Natural killer cell (primary cell): ENCODE measurements at regions of chr12 and their contacts with region 1.

Region 1: DNA sequence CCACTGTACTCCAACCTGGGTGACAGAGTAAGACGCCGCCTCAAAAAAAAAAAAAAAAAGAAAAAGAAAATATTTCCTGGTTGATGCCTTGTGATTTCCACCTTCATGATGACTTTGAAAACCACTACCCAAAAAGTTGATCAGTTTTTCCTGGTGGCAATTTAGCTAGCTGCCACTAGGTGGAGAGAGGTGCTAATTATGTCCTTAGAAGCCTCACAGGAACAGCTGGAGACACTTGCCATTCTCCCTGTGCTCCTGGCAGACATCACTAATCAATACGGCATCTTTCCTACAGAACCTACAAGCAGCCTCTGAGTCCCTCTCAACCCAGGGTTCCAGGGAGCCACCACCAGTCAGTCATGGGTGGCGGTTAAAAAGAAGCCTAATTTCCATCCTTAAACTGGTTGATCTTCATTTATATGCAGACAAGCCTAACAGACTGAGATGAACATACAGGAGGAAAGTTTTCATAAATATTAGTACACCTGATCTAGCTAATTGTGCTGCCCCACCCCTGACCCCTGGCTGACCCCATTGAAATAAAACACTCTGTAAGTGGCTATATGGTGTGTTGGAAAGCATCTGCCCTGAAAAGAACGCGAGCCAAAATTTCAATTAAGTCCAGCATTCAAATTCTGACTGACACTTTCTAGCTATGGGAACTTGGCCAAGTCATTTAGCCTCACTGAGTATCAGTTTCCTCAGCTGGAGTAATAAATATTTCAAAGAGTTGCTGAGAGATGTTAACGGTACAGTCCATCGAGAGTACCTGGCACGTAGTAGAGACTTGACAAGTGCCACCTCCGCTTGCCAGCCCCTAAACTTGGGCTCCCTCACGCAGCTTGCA is 6.2 kb upstream of the OAS1 start:
- DNase-seq: peak in 1 of 2 donors; percentile 71
- ATAC-seq: peak; percentile 35 to 61 (median 49)
- H3K4me3 ChIP-seq: no peak overlapping the region
- H3K4me3 Mint-ChIP-seq: no peak overlapping the region
- H3K27ac ChIP-seq: no peak overlapping the region
- H3K27ac Mint-ChIP-seq: no peak overlapping the region
- H3K4me1 ChIP-seq: no peaks in the 10 kb centered on the region
- H3K4me1 Mint-ChIP-seq: peaks cover 10 to 12% of the 10 kb centered on the region in 2 donors
- H3K27me3 ChIP-seq: no peaks in the 10 kb centered on the region
- H3K27me3 Mint-ChIP-seq: peaks cover 13 to 22% of the 10 kb centered on the region in 2 donors
- CTCF ChIP-seq: peak; percentile 63

Region 2: GRCh38 chr12:113030875-113031525 is 130.5 kb after region 1 on chr12:
- intact Hi-C with region 1: loop called (anchors 1 kb)
- DNase-seq: peak in 1 of 2 donors; percentile 54
- ATAC-seq: peak in 1 of 3 donors; percentile 64
- H3K4me3 ChIP-seq: no peak overlapping the region
- H3K4me3 Mint-ChIP-seq: no peak overlapping the region
- H3K27ac ChIP-seq: no peak overlapping the region
- H3K27ac Mint-ChIP-seq: no peak overlapping the region
- H3K4me1 ChIP-seq: no peaks in the 10 kb centered on the region
- H3K4me1 Mint-ChIP-seq: peaks cover 5 to 6% of the 10 kb centered on the region in 2 donors
- H3K27me3 ChIP-seq: no peaks in the 10 kb centered on the region
- H3K27me3 Mint-ChIP-seq: peaks cover 6 to 17% of the 10 kb centered on the region in 2 donors
- CTCF ChIP-seq: peak; percentile 41

Region 3: DNA sequence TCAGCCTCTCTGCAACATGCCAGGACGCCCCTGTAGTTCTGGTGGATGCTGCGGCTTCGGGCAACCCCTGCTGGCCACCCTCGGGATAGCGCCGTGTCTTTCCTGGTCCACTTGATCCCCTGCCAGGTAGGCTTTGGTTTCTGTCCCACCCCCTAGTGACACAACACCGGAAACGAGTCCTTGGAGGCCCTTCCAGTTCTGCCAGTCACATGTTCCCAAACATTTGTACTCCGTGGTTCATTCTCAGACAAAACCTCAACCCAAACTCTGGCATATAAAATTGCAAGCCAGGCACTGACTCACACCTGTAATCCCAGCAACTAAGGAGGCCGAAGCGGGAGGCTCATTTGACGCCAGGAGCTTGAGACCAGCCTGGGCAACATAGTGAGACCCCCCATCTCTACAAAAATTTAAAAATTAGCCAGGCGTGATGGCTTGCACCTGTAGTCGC is 197.9 kb after region 1 on chr12:
- intact Hi-C with region 1: loop called (anchors 5 kb)
- DNase-seq: peak; percentile 54 to 82
- ATAC-seq: peak in 2 of 3 donors; percentile 69 to 74
- H3K4me3 ChIP-seq: no peak overlapping the region
- H3K4me3 Mint-ChIP-seq: no peak overlapping the region
- H3K27ac ChIP-seq: no peak overlapping the region
- H3K27ac Mint-ChIP-seq: no peak overlapping the region
- H3K4me1 ChIP-seq: peaks cover 36% of the 10 kb centered on the region
- H3K4me1 Mint-ChIP-seq: peaks cover 0 to 5% of the 10 kb centered on the region in 2 donors
- H3K27me3 ChIP-seq: no peaks in the 10 kb centered on the region
- H3K27me3 Mint-ChIP-seq: no peaks in the 10 kb centered on the region
- CTCF ChIP-seq: peak; percentile 81